ENCODE measurements at regions of chr5 and their contacts with region 1.

Region 1: DNA sequence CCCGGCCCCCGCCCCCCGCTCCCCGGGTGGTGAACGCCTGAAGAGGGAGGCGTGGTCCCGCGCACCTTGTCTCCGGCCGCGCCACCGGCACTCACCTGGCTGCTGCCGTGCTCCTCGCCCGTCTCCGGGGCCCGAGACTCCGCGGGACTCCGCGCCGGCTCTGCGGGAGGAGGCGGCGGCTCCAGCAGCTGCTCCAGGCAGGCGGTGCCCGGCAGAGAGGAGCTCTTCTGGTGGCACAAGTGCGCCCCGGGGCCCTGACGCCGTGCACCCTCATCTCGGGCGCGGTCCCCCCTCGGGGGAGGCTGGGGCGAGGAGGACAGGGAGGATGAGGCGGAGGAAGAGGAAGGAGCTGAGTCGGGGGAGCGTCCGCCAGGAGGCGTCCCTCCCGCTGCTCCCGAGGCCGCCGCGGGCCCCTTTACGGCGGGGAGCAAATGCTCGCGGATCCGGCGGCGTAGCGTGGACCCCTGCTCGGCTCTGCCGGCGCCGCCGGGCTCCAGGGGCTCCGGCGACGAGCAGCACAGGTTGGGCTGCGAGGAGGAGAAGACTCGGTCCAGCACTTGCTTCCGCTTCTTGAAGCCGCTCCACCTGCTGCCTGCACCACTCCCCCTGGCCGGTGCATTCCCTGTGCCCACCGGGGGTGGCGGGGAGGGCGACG is 1.0 kb downstream of the MCTP1 start:
- ATAC-seq: peak; percentile 27 to 73 (median 68)
- H3K4me3 ChIP-seq: peak overlapping the region; percentile 56 to 82 (median 65)
- H3K27ac ChIP-seq: no peak overlapping the region
- H3K4me1 ChIP-seq: peaks cover 3 to 5% of the 10 kb centered on the region in 2 donors

Region 2: GRCh38 chr5:95486191-95486590 is 202.3 kb after region 1 on chr5:
- in situ Hi-C with region 1: loop called in 1 of 9 experiments (anchors 25 kb)
- ATAC-seq: peak in 3 of 8 experiments; percentile 94 to 99 (median 98)
- H3K4me3 ChIP-seq: no peak overlapping the region
- H3K27ac ChIP-seq: no peak overlapping the region
- H3K4me1 ChIP-seq: no peaks in the 10 kb centered on the region

Region 3: GRCh38 chr5:95591490-95591901 is 307.6 kb after region 1 on chr5:
- in situ Hi-C with region 1: no loop called
- ATAC-seq: peak in 2 of 8 experiments; percentile 19 to 41
- H3K4me3 ChIP-seq: no peak overlapping the region
- H3K27ac ChIP-seq: no peak overlapping the region
- H3K4me1 ChIP-seq: no peaks in the 10 kb centered on the region

Measured in motor neuron (in vitro differentiated cells).